Activated naive CD4-positive, alpha-beta T cell treated with anti-CD3 and anti-CD28 coated beads for 36 hours (primary cell): ENCODE measurements at regions of chr11 and their contacts with region 1.

Region 1: GRCh38 chr11:46075168-46075567 is 46.1 kb downstream of the PHF21A start:
- DNase-seq: no peak
- H3K4me3 Mint-ChIP-seq: no peak overlapping the region
- H3K27ac Mint-ChIP-seq: peak overlapping the region; percentile 2
- H3K4me1 Mint-ChIP-seq: peaks cover 6% of the 10 kb centered on the region
- H3K27me3 Mint-ChIP-seq: no peaks in the 10 kb centered on the region

Region 2: GRCh38 chr11:46039990-46040389 is 35.2 kb before region 1 on chr11:
- CTCF ChIA-PET with region 1: interaction called, 5 read pairs
- intact Hi-C with region 1: loop called (anchors 5 kb)
- DNase-seq: no peak
- H3K4me3 Mint-ChIP-seq: no peak overlapping the region
- H3K27ac Mint-ChIP-seq: no peak overlapping the region
- H3K4me1 Mint-ChIP-seq: peaks cover 26% of the 10 kb centered on the region
- H3K27me3 Mint-ChIP-seq: no peaks in the 10 kb centered on the region

Region 3: GRCh38 chr11:46090375-46090774 is 15.2 kb after region 1 on chr11:
- CTCF ChIA-PET with region 1: no interaction called
- intact Hi-C with region 1: no loop called
- DNase-seq: no peak
- H3K4me3 Mint-ChIP-seq: no peak overlapping the region
- H3K27ac Mint-ChIP-seq: no peak overlapping the region
- H3K4me1 Mint-ChIP-seq: no peaks in the 10 kb centered on the region
- H3K27me3 Mint-ChIP-seq: no peaks in the 10 kb centered on the region

Region 4: DNA sequence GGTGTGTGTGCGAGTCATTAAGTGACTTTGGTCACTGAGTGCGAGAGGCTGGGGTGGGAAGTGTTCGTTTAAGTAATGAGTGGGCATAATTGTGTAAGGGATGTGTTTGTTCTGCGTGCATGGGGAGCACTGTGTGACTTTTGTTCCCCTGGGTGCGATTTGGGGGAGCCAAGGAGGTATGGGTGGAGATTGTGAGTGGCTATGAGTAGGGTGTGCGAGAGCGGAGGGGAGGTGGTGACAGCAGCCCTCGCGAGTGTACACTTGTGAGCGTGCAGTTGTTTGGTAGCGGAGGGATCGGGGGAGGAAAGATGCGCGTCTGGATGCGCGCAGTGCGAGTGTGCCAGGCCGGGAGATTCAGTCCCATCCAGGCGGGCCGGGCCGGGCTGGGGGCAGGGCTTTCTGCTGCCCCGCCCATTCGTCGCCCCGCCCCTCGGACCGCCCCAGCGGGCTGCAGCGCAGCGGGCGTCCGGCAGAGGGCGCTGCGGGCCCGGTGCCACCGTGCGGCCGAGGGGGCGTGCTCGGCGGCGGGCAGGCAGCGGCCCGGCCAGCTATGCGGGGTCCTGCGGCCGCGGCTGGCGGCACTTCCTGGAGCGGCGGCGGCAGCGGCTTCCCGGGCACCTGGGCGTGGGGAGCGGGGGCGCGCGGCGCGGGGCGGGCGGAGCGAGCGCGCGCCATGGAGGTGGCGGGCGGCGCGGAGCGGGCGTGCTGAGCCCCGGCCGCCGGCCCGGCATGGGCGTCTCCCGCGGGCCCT is 271.9 kb after region 1 on chr11 and contains the start of gene DGKZ:
- CTCF ChIA-PET with region 1: no interaction called
- intact Hi-C with region 1: no loop called
- DNase-seq: peak; percentile 86
- H3K4me3 Mint-ChIP-seq: peak within 1 kb of the TSS; percentile 84
- H3K27ac Mint-ChIP-seq: peak within 1 kb of the TSS; percentile 92
- H3K4me1 Mint-ChIP-seq: peaks cover 80% of the 10 kb centered on the region
- H3K27me3 Mint-ChIP-seq: no peaks in the 10 kb centered on the region
- total RNA-seq, gene DGKZ: 82.9 to 89.2 TPM